ENCODE measurements at regions of chr1 and their contacts with region 1.

Region 1: DNA sequence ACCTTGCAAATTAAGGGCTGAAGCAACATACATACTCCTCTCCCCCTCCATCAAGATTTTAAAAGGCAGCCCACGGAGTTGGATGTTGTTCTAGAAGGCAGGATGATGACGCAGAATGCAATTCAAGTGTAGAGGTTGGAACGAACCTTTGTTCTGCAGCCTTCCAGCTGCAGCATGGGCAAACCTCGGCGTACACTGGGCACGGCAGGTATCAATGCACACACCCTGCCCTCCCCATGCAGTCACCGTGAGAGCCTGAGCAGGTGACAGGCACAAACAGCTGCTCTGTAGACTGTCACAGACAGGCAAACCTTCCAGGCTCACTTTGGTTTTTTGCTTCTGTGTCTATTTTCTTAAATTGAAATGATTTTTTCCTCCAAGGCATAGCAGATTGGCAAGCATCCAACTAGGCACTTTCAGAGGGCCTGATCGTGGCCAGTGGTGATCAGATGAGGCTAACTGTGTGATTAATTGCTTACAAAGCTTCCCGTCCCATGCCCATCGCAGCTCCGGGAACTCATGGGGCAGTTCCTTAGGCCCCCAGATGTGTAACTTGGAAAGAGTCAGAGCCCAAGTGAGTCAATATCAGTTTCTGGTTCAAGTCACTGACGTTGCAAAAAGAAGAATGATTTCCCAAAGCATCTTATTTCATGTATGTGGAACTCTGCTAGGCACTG is 82.3 kb downstream of the ITPKB start:
- DNase-seq: peak in 1 of 2 donors; percentile 89
- H3K4me3 ChIP-seq: no peak overlapping the region
- H3K27ac ChIP-seq: peak overlapping the region; percentile 74 to 77
- H3K4me1 ChIP-seq: peaks cover 29 to 68% of the 10 kb centered on the region in 2 donors
- H3K27me3 ChIP-seq: no peaks in the 10 kb centered on the region
- CTCF ChIP-seq: no peak

Region 2: GRCh38 chr1:226209307-226210059 is 447.3 kb before region 1 on chr1:
- intact Hi-C with region 1: no loop called
- DNase-seq: no peak
- H3K4me3 ChIP-seq: no peak overlapping the region
- H3K27ac ChIP-seq: no peak overlapping the region
- H3K4me1 ChIP-seq: no peaks in the 10 kb centered on the region
- H3K27me3 ChIP-seq: no peaks in the 10 kb centered on the region
- CTCF ChIP-seq: no peak

Region 3: GRCh38 chr1:226702957-226703831 is 46.5 kb after region 1 on chr1:
- intact Hi-C with region 1: loop called (anchors 1 kb)
- DNase-seq: peak in 1 of 2 donors; percentile 84
- H3K4me3 ChIP-seq: peak overlapping the region; percentile 61 to 85
- H3K27ac ChIP-seq: peak overlapping the region; percentile 96 to 98
- H3K4me1 ChIP-seq: peaks cover 0 to 8% of the 10 kb centered on the region in 2 donors
- H3K27me3 ChIP-seq: no peaks in the 10 kb centered on the region
- CTCF ChIP-seq: no peak

Region 4: DNA sequence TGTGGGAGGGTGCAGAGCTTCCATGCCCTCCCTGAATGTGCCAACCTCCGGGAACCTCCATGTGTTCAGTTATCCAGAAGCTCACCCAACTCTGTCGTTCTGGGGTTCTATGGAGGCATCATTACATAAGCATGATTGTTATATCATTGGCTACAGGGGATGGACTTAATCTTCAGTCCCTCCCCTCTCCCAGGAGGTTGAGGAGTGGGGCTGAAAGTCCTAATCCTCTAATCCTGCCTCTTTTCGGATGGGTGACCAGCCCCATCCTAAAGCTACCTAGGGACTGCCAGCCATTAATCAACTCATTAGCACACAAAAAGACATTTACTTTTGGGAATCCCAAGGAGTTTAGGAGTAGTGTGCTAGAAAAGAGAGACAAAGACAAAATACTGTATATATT is 181.7 kb after region 1 on chr1:
- intact Hi-C with region 1: no loop called
- DNase-seq: no peak
- H3K4me3 ChIP-seq: no peak overlapping the region
- H3K27ac ChIP-seq: no peak overlapping the region
- H3K4me1 ChIP-seq: no peaks in the 10 kb centered on the region
- H3K27me3 ChIP-seq: no peaks in the 10 kb centered on the region
- CTCF ChIP-seq: no peak